ENCODE measurements at regions of chr3 and their contacts with region 1.

Region 1: GRCh38 chr3:53045518-53046170 is at the start of gene SFMBT1:
- DNase-seq: peak; percentile 36 to 55
- ATAC-seq: peak; percentile 77 to 82
- H3K4me3 ChIP-seq: peak within 1 kb of the TSS; percentile 81 to 94 (median 90)
- H3K27ac ChIP-seq: peak within 1 kb of the TSS; percentile 90 to 98 (median 95)
- H3K4me1 ChIP-seq: peaks cover 10 to 12% of the 10 kb centered on the region in 2 donors
- H3K27me3 ChIP-seq: no peaks in the 10 kb centered on the region
- CTCF ChIP-seq: no peak
- POLR2A ChIP-seq: peak; percentile 69 to 72
- total RNA-seq, gene SFMBT1: 17.5 to 39.7 (median 29.8) TPM

Region 2: GRCh38 chr3:52705688-52706686 is 339.7 kb before region 1 on chr3 and contains the starts of genes GLT8D1 and SPCS1:
- in situ Hi-C with region 1: no loop called
- intact Hi-C with region 1: loop called (anchors 5 kb)
- DNase-seq: peak; percentile 71 to 77
- ATAC-seq: peak; percentile 93 to 94
- H3K4me3 ChIP-seq: peak within 1 kb of the TSS; percentile 79 to 97 (median 94)
- H3K27ac ChIP-seq: peak within 1 kb of the TSS; percentile 80 to 93 (median 85)
- H3K4me1 ChIP-seq: peaks cover 33 to 34% of the 10 kb centered on the region in 2 donors
- H3K27me3 ChIP-seq: no peaks in the 10 kb centered on the region
- CTCF ChIP-seq: no peak
- POLR2A ChIP-seq: peak; percentile 50 to 74
- total RNA-seq, gene GLT8D1: 15.6 to 39.6 (median 27.5) TPM
- total RNA-seq, gene SPCS1: 152 to 188 (median 162) TPM

Region 3: DNA sequence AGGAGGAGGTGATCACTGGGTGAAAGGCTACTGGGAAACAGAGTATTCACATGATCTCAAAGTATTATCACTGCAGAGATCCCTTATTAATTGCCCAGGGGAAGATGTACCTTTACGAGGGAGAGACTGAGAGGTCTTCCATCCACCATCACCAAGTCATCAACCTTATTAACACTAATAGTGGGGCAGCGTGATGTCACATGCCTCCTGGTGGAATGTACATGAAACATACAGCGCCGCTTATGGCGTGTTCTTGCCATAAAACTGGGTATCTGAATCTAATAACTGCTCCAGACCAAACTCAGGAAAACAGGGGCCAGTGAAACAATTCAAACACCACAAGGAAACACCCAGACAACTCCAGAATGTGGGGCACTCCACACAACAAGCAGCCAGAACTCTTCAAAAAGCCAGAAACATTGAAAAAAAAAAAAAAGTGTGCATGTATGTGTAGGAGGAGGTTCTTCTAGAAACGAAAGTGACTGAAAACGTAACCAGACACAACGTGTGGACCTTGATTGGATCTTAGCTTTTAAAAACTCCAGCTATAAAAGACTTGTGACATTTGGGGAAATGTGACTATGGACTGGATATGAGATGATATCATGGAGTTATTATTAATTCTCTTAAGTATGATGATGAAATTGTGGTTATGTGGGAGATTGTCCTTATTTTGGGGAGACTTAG is 152.9 kb before region 1 on chr3:
- in situ Hi-C with region 1: no loop called
- intact Hi-C with region 1: no loop called
- DNase-seq: no peak
- ATAC-seq: peak; percentile 52
- H3K4me3 ChIP-seq: peak overlapping the region; percentile 15 to 35 (median 34)
- H3K27ac ChIP-seq: peak overlapping the region; percentile 77 to 85 (median 82)
- H3K4me1 ChIP-seq: peaks cover 54 to 60% of the 10 kb centered on the region in 2 donors
- H3K27me3 ChIP-seq: no peaks in the 10 kb centered on the region
- CTCF ChIP-seq: peak in 1 of 5 experiments; percentile 31
- POLR2A ChIP-seq: no peak

Region 4: DNA sequence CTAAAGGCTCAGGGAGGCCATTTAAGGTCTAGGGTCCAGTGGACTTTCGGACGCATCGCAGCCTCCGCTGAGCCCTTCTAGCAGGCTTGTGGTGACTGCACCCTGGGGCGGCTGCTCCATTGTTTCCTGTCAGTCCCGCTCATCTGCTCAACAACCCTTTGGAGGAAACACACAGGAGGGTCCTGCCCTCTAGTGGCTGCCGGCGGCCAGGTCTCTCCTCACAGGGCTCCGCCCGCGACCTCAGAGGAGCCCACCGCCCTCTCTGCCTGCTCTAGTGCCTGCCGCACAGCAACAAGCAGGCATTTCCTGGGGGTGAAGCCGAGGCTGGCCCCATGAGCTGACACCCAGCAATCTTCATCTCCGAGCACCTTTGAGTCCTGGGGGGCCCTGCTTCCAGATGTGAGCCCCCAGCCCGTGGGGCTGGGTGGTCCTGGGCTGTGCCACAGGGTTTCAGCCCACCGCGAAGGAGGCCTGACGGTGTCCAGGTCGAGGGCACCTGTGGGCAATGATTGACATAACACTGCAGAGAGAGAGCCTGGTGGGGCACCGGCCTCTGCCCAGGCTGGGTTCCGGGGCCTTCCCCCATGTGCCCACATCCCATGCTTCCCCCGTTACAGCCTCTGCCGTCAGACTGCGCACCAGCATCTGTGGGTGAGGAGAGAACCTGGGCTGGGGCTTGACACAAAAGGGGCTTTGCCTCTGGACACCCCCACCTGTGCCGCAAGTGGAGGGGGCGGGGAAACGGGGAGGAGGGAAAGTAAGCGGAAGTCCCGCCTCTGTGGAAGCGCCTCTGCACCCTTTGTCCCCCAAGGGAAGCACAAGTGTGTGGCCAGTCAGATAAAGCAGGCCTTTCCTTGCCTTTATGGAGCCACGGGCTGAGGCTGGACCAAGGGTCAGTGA is 27.3 kb after region 1 on chr3:
- in situ Hi-C with region 1: no loop called
- intact Hi-C with region 1: loop called (anchors 2 kb)
- DNase-seq: peak; percentile 50 to 70
- ATAC-seq: peak; percentile 86 to 93
- H3K4me3 ChIP-seq: peak overlapping the region; percentile 63 to 91 (median 70)
- H3K27ac ChIP-seq: peak overlapping the region; percentile 51 to 80 (median 64)
- H3K4me1 ChIP-seq: peaks cover 8 to 9% of the 10 kb centered on the region in 2 donors
- H3K27me3 ChIP-seq: no peaks in the 10 kb centered on the region
- CTCF ChIP-seq: peak; percentile 86 to 95 (median 93)
- POLR2A ChIP-seq: no peak

Measured in gastrocnemius medialis (tissue), 4 donors.